ENCODE measurements at regions of chr12 and their contacts with region 1.

Region 1: GRCh38 chr12:120292661-120293531 is at the start of gene RNU4-1:
- DNase-seq: peak; percentile 90
- ATAC-seq: peak; percentile 68
- H3K4me3 Mint-ChIP-seq: no peak within 1 kb of the TSS
- H3K27ac Mint-ChIP-seq: no peak within 1 kb of the TSS
- H3K4me1 Mint-ChIP-seq: peaks cover 10% of the 10 kb centered on the region
- H3K27me3 Mint-ChIP-seq: no peaks in the 10 kb centered on the region
- CTCF ChIP-seq: no peak
- total RNA-seq, gene RNU4-1: 692 to 1,025 TPM

Region 2: GRCh38 chr12:119988264-119988781 is 304.6 kb before region 1 on chr12:
- CTCF ChIA-PET with region 1: no interaction called
- POLR2A ChIA-PET with region 1: no interaction called
- intact Hi-C with region 1: no loop called
- DNase-seq: no peak
- ATAC-seq: peak; percentile 21
- H3K4me3 Mint-ChIP-seq: peak overlapping the region; percentile 81
- H3K27ac Mint-ChIP-seq: peak overlapping the region; percentile 90
- H3K4me1 Mint-ChIP-seq: peaks cover 34% of the 10 kb centered on the region
- H3K27me3 Mint-ChIP-seq: peaks cover under 1% of the 10 kb centered on the region
- CTCF ChIP-seq: peak; percentile 26

Region 3: DNA sequence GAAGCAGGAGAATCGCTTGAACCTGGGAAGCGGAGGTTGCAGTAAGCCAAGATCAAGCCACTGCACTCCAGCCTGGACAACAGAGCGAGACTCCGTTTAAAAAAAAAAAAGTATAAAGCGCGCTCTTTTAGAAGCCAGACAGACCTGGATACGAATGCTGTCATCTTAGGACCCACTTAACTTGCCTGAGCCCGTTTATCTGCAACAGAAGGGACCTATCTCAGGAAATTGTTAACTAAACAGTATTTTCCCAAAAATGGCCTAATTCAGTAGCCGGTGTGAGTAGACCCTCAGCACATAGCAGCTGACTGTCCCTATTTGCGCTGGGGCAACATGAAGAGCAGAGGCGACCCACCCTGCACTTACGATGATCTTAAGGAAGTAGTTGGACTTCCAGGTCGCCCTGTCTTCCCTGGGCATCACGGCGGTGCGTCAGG is 92.5 kb before region 1 on chr12:
- CTCF ChIA-PET with region 1: interaction called, 14 read pairs
- POLR2A ChIA-PET with region 1: interaction called, 263 read pairs
- intact Hi-C with region 1: no loop called
- DNase-seq: no peak
- ATAC-seq: no peak
- H3K4me3 Mint-ChIP-seq: peak overlapping the region; percentile 97
- H3K27ac Mint-ChIP-seq: peak overlapping the region; percentile 95
- H3K4me1 Mint-ChIP-seq: peaks cover 37% of the 10 kb centered on the region
- H3K27me3 Mint-ChIP-seq: no peaks in the 10 kb centered on the region
- CTCF ChIP-seq: no peak

Region 4: DNA sequence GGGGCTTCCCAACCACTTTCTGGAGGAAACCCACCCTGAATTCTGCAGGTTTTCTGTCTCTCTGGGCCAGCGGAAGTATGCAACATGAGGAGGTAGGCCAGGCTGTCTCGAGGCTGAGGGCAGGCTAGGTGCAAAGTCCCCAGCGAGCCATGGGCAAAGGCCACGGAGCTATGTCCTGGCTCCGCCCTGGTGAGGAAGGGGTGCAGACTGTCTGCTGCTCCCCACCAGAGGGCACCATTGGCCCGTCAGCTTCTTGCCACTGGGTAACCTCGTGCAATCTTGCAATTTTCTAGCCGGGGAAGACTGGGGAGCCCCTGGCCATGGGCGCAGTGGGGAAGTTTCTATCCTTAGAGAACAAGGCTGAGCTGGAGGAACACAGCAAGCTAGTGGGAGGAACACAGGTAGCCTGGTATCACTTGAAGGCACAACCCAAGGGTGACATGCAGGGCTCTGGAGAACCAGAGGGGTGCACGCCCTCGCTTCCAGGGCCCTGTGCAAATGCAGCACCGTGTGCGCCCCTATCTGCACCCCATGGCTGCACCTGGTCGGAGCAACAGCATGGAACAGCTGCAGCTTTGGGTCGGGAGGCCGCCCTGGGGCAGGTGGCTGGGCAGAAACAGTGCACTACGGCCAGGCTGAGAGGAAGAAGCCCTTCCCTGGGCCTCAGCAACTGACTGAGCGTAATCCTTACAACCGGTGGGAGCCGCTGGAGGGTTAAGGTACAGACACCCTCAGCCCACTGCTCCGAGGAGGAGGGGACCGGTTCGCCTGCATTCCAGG is 64.4 kb before region 1 on chr12:
- CTCF ChIA-PET with region 1: interaction called, 114 read pairs
- POLR2A ChIA-PET with region 1: interaction called, 394 read pairs
- intact Hi-C with region 1: no loop called
- DNase-seq: peak; percentile 92
- ATAC-seq: peak; percentile 72
- H3K4me3 Mint-ChIP-seq: peak overlapping the region; percentile 0
- H3K27ac Mint-ChIP-seq: peak overlapping the region; percentile 36
- H3K4me1 Mint-ChIP-seq: peaks cover 77% of the 10 kb centered on the region
- H3K27me3 Mint-ChIP-seq: no peaks in the 10 kb centered on the region
- CTCF ChIP-seq: peak; percentile 83

Region 5: DNA sequence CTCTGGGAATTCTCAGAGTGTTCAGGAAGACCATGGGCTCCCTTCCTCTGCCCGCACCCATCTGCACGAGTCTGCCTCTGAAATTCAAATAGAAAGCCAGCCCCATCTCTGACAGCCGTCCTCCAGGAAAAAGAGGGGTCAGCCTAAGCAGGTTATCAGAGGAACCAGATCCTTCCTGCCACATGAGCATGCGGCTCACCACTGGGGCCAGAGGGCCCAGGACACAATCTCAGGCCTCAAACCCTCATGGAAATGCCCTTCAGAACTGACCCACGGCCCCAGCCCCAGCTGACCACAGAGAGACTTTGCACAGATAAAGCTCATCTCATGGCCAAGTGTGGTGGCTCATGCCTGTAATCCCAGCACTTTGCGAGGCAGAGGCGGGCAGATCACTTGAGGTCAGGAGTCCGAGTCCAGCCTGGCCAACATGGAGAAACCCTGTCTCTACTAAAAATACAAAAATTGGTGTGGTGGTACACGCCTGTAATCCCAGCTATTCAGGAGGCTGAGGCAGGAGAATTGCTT is 50.6 kb before region 1 on chr12:
- CTCF ChIA-PET with region 1: no interaction called
- POLR2A ChIA-PET with region 1: interaction called, 136 read pairs
- intact Hi-C with region 1: no loop called
- DNase-seq: no peak
- ATAC-seq: no peak
- H3K4me3 Mint-ChIP-seq: no peak overlapping the region
- H3K27ac Mint-ChIP-seq: no peak overlapping the region
- H3K4me1 Mint-ChIP-seq: peaks cover 57% of the 10 kb centered on the region
- H3K27me3 Mint-ChIP-seq: no peaks in the 10 kb centered on the region
- CTCF ChIP-seq: no peak

Region 6: GRCh38 chr12:120265473-120266179 is 27.3 kb before region 1 on chr12 and contains the start of gene PXN:
- CTCF ChIA-PET with region 1: interaction called, 18 read pairs
- POLR2A ChIA-PET with region 1: interaction called, 207 read pairs
- intact Hi-C with region 1: no loop called
- DNase-seq: peak; percentile 88
- ATAC-seq: peak; percentile 82
- H3K4me3 Mint-ChIP-seq: peak within 1 kb of the TSS; percentile 78
- H3K27ac Mint-ChIP-seq: peak within 1 kb of the TSS; percentile 79
- H3K4me1 Mint-ChIP-seq: peaks cover 45% of the 10 kb centered on the region
- H3K27me3 Mint-ChIP-seq: no peaks in the 10 kb centered on the region
- CTCF ChIP-seq: peak; percentile 71
- total RNA-seq, gene PXN: 40.2 to 45.3 TPM

Region 7: GRCh38 chr12:120317224-120318105 is 24.6 kb after region 1 on chr12:
- CTCF ChIA-PET with region 1: interaction called, 9 read pairs
- POLR2A ChIA-PET with region 1: interaction called, 95 read pairs
- intact Hi-C with region 1: no loop called
- DNase-seq: peak; percentile 100
- ATAC-seq: peak; percentile 100
- H3K4me3 Mint-ChIP-seq: peak overlapping the region; percentile 96
- H3K27ac Mint-ChIP-seq: peak overlapping the region; percentile 95
- H3K4me1 Mint-ChIP-seq: peaks cover 10% of the 10 kb centered on the region
- H3K27me3 Mint-ChIP-seq: no peaks in the 10 kb centered on the region
- CTCF ChIP-seq: peak; percentile 64

Region 8: GRCh38 chr12:120469450-120470149 is 176.7 kb after region 1 on chr12 and contains the start of gene SRSF9:
- CTCF ChIA-PET with region 1: no interaction called
- POLR2A ChIA-PET with region 1: interaction called, 27 read pairs
- intact Hi-C with region 1: no loop called
- DNase-seq: peak; percentile 97
- ATAC-seq: peak; percentile 94
- H3K4me3 Mint-ChIP-seq: peak within 1 kb of the TSS; percentile 77
- H3K27ac Mint-ChIP-seq: peak within 1 kb of the TSS; percentile 85
- H3K4me1 Mint-ChIP-seq: peaks cover 42% of the 10 kb centered on the region
- H3K27me3 Mint-ChIP-seq: no peaks in the 10 kb centered on the region
- CTCF ChIP-seq: peak; percentile 94
- total RNA-seq, gene SRSF9: 225 to 236 TPM